Heart right ventricle (tissue), 16 donors: ENCODE measurements at regions of chr11 and their contacts with region 1.

Region 1: DNA sequence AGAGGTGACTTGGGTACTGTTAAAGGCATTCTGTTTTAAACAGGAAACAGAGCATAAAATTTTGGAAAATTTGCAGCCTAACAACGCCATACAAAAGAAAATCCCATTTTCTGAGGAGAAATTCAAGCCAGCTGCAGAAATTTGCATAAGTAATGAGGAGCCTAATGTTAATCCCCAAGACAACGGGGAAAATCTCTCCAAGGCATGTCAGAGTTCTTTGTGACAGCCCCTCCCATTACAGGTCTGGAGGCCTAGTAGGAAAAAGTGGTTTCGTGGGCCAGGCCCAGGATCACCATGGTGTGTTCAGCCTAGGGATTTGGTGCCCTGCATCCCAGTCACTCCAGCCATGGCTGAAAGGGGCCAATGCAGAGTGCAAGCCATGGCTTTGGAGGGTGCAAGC is 1333.1 kb upstream of the TENM4 start:
- DNase-seq: no peak
- ATAC-seq: no peak
- H3K4me3 ChIP-seq: no peak overlapping the region
- H3K27ac ChIP-seq: no peak overlapping the region
- H3K4me1 ChIP-seq: no peaks in the 10 kb centered on the region
- H3K27me3 ChIP-seq: no peaks in the 10 kb centered on the region
- CTCF ChIP-seq: no peak

Region 2: DNA sequence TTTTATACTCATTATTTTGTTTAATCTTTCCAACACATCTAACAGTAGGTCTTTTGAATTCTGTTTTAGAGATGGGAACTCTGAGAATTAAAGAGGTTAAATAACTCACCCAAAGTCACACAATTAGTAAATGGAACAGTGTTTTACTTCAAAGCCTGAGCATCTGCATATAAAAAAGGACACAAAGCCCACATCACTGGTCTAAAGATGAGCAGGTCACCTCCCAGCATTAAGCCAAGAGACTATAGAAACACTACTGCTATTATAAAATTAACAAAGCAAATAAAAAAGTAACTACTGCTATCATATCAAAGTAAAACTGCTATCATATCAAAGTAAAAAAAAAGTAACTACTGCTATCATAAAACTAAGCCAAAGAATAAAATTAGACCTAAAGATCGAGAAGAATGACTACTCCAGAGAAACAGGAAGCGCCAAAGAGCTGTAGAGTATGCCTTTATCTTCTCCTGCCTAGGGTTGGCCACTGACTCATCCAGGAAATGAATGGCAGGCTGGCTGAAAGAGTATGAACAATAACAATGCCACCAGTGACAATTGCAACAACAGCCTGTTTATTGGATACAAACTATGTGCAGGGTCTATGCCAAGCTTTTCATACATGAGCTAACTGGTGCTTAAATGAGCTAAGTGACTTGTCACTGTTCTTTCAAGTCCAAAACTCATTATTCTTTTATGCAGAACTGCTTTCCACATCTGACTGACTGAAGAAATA is 180.1 kb before region 1 on chr11:
- intact Hi-C with region 1: no loop called
- DNase-seq: no peak
- ATAC-seq: no peak
- H3K4me3 ChIP-seq: no peak overlapping the region
- H3K27ac ChIP-seq: no peak overlapping the region
- H3K4me1 ChIP-seq: peaks cover 0 to 5% (median 0%) of the 10 kb centered on the region in 9 donors
- H3K27me3 ChIP-seq: no peaks in the 10 kb centered on the region
- CTCF ChIP-seq: no peak

Region 3: GRCh38 chr11:80727315-80728230 is 46.3 kb before region 1 on chr11:
- intact Hi-C with region 1: no loop called
- DNase-seq: no peak
- ATAC-seq: no peak
- H3K4me3 ChIP-seq: no peak overlapping the region
- H3K27ac ChIP-seq: no peak overlapping the region
- H3K4me1 ChIP-seq: no peaks in the 10 kb centered on the region
- H3K27me3 ChIP-seq: no peaks in the 10 kb centered on the region
- CTCF ChIP-seq: peak in 3 of 9 donors; percentile 12 to 18 (median 17)

Region 4: GRCh38 chr11:80916173-80916798 is 142.4 kb after region 1 on chr11:
- intact Hi-C with region 1: no loop called
- DNase-seq: no peak
- ATAC-seq: no peak
- H3K4me3 ChIP-seq: no peak overlapping the region
- H3K27ac ChIP-seq: no peak overlapping the region
- H3K4me1 ChIP-seq: no peaks in the 10 kb centered on the region
- H3K27me3 ChIP-seq: no peaks in the 10 kb centered on the region
- CTCF ChIP-seq: no peak

Region 5: DNA sequence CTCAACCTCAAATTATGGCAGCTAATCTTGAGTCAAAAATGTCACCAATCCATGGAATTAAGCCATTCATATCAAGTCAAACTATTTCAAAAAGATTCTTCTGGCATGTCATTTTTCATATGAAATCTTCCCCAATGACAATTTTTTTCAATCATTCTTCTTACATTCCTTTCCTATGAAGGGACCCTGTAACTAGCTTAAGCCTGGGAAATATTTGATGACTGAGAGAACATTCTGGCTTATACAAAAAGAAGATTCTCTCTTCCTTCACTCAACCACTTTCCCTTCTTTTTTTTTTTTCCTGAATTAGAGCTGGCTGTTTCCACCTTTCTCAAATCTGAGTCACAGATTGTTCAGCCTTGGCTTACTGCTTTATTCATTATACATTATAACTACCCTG is 1056.1 kb after region 1 on chr11:
- intact Hi-C with region 1: loop called in 1 of 10 experiments (anchors 5 kb)
- DNase-seq: no peak
- ATAC-seq: no peak
- H3K4me3 ChIP-seq: no peak overlapping the region
- H3K27ac ChIP-seq: no peak overlapping the region
- H3K4me1 ChIP-seq: no peaks in the 10 kb centered on the region
- H3K27me3 ChIP-seq: no peaks in the 10 kb centered on the region
- CTCF ChIP-seq: no peak